ENCODE measurements at regions of chr17 and their contacts with region 1.

Region 1: DNA sequence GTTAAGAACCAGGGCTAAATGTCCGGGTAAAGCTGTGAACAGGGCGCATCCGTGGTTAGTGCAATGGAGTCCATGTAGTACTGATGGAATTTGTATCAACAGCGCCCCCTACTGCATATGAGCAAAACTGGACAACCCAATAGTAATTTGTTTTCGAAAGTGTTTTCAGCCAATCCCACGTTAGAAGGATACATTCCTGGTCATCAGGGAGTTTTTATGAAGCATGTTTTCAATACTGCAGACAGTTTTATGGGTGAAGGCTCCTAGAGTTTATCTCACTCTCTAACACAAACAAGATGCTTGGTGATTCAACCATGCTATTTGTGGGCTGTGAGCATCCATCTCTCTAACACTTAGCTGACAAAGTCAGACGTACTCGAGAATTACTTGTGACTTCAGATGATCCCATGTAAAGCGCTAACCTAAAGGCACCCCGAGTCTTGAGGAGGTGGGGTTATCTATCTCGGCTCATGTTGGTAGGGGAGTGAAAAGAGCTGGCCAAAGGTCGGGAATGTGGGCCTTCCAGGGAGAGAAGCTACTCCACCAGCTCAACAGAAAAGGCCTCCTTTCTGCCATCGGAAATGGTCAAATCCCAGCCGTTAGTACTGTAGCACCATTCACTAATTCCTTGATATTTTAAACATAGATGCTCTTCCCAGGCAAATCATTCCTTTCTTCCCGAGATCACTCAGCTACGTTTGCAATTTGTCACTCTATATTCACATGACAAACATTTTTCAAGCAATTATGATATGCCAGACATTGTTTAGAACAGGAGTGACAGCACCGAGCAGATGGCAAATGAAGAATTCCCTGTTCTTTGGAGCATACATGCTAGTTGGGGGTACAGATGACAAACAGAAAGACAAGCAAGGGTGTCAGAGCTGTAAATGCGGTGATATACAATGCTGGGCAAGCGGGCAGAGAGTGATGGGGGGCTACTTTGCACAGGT is 46.9 kb upstream of the HNF1B start:
- DNase-seq: peak; percentile 87
- H3K4me3 Mint-ChIP-seq: no peak overlapping the region
- H3K27ac Mint-ChIP-seq: no peak overlapping the region
- H3K4me1 Mint-ChIP-seq: peaks cover 6% of the 10 kb centered on the region
- H3K27me3 Mint-ChIP-seq: peaks cover 35% of the 10 kb centered on the region

Region 2: DNA sequence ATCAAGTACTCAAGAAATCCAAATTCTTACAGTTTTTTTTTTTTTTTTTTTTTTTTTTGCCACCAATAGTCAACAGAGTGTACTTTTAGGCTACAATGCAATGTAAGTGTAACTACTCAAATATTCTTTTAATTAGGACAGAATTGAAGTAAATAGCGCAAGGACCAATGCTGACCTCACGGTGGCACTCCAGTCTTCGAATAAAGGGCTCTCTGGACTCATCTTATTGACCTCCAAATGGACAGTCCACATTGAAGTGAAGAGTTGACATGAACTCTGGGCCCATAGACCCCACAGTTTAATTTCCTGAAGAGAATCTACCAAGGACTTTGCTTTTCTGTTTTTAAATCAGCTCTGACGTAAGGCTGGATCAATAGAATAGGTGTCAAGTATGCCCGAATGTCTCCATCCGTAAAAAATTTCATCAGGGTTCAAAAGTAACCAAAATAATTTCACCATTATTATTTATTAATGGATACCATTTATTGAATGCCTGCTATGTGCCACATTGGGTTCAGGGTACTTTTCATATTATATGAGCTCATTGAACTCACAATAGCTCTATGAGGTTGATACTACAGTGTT is 141.2 kb before region 1 on chr17:
- intact Hi-C with region 1: loop called (anchors 2 kb)
- DNase-seq: no peak
- H3K4me3 Mint-ChIP-seq: no peak overlapping the region
- H3K27ac Mint-ChIP-seq: no peak overlapping the region
- H3K4me1 Mint-ChIP-seq: peaks cover 10% of the 10 kb centered on the region
- H3K27me3 Mint-ChIP-seq: peaks cover 66% of the 10 kb centered on the region

Region 3: DNA sequence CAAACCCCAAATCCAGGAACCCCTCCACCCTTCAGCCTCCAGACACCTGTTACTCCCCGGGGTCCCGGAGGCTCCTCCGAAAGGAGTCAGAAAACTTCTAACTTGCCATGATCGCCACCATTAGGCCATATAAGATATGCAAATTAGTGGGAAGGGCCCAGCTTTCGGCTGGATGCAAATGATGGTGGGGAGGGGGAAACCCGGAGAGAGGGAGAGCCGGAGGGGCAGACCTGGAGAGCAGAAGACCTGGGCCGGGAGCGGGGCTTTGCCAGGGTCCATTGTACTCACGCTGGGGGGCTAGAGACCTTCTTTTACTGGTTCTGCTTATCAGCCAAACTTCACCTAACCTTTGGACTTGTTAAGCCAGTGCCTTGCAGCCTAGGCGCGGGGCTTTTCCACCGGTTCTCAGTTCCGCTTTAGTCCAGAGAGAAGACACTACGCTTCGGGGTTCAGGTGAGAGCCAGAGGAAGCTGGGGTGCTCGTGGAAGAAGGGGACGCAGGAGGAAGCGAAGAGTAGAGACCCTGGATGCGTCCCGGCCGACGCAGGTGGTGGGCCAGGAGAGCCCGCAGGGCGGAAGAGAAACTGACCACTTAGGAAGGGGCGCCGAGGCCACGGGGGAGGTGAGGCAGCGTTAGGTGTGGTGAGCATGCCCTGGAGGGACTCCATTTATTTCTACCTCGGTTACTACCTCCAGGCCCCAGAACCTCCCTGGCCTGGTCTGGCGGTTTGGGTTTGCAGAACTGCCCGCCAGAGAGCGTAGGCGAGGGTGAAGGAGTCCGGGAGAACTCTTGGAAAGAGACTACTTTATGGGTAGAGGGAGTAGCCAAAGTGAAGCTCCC is 46.5 kb before region 1 on chr17 and contains the start of gene HNF1B:
- intact Hi-C with region 1: loop called (anchors 5 kb)
- DNase-seq: peak; percentile 71
- H3K4me3 Mint-ChIP-seq: peak within 1 kb of the TSS; percentile 81
- H3K27ac Mint-ChIP-seq: peak within 1 kb of the TSS; percentile 53
- H3K4me1 Mint-ChIP-seq: peaks cover 13% of the 10 kb centered on the region
- H3K27me3 Mint-ChIP-seq: peaks cover 70% of the 10 kb centered on the region
- total RNA-seq, gene HNF1B: 2.2 and 2.9 TPM in 2 replicates

Region 4: DNA sequence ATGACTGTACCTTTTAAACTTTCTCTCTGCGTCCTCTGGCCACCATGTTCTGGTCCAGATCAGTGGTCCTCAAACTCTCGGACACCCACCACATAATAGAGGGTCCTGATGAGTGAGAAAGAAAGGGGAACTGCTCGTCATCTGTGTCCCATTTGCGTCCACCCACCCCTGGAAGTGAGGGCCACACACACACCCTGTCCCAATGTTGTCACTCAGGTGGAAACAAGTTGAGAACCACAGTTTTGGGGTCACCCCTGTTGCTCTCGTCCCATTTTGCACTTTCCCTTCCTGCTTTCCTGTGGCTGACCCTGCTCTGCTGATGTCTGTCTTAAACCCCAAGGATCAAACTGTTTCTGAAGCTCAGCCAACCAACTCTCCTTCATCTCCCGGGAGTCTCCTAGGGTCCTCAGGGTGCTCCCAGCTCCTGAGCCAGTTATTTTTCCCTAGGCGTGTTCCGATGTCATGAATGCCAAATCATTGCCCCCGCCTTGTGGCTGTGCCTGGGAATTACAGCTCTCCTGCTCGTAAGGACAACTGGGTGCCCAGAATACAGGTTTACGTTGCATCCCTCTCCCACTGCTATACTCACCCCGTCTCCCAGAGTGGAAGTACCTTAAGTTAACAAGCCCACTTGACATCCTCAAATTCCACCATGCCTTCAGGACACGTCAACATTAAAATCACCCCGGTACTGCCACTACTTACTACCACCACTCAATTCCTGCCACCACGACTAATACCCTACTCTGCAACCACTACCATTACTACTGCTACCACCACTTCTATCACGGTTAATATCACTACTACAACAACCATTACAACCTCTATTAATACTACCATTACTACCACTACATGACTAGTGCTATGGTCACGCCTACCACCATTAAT is 20.8 kb before region 1 on chr17:
- intact Hi-C with region 1: loop called (anchors 1 kb)
- DNase-seq: peak; percentile 81
- H3K4me3 Mint-ChIP-seq: no peak overlapping the region
- H3K27ac Mint-ChIP-seq: peak overlapping the region; percentile 21
- H3K4me1 Mint-ChIP-seq: peaks cover 51% of the 10 kb centered on the region
- H3K27me3 Mint-ChIP-seq: peaks cover 18% of the 10 kb centered on the region